Activated CD4-positive, alpha-beta T cell treated with anti-CD3 and anti-CD28 coated beads, Interleukin-2, amount 10 ng/mL, durations not matched to agents 24 days and 14 days (primary cell): ENCODE measurements at regions of chr2 and their contacts with region 1.

Region 1: DNA sequence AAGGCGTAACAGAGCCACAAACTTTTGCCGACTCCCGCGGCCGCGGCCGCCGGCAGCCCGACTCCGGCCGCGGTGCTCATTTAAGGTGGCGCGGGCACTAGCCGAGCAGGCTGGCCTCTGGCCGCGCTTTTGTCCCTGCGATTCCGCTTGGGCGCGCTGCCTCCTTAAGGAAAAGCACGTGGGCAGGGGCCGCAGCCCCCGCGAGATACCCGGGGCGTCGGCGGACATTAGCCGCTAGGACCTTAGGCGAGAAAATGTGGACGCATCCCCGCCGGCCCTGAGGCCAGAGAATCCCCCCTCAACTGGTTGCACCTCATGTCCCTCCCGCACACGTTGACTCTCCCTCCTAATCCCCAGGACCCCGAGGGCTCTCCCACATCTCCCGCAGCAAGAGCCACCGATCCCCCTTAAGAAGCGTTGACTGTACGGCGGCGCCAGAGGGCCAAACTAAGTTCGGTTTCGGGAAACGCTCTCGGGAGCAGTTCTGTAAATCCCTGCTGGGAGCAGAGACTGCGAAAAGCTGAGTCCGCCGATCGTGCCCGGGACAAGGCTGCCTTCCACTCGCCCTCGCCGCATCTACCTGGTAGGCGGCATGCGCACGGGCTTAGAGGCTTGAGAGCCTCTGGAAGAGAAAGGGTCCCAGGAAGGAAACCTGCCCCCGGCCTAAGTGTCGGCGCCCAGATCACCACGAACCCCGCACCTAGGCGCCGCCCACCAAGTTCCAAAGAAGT is 1.7 kb upstream of the SATB2 start:
- DNase-seq: peak; percentile 85
- H3K4me3 Mint-ChIP-seq: peak overlapping the region; percentile 91
- H3K27ac Mint-ChIP-seq: peak overlapping the region; percentile 75
- H3K4me1 Mint-ChIP-seq: peaks cover 15% of the 10 kb centered on the region
- H3K27me3 Mint-ChIP-seq: peaks cover 57% of the 10 kb centered on the region

Region 2: DNA sequence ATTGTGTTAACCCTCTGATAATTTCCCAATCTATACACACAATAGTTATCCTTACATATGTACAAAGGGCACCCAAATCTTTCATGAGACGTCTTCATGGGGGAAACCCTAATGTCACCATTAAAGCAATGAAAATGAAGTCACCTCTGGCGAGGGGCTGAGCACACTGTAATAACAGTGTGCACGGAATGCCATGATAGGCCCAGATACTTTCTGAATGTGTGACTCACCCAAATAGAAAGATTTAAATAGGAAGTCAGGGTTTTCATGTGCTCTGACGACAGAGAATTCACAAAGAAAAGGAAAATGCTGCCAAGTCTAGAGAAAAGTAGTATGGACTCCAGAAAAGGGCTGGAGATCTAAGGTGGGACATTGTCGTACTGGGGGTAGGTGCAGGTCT is 130.0 kb before region 1 on chr2:
- intact Hi-C with region 1: no loop called
- DNase-seq: no peak
- H3K4me3 Mint-ChIP-seq: no peak overlapping the region
- H3K27ac Mint-ChIP-seq: no peak overlapping the region
- H3K4me1 Mint-ChIP-seq: no peaks in the 10 kb centered on the region
- H3K27me3 Mint-ChIP-seq: no peaks in the 10 kb centered on the region

Region 3: DNA sequence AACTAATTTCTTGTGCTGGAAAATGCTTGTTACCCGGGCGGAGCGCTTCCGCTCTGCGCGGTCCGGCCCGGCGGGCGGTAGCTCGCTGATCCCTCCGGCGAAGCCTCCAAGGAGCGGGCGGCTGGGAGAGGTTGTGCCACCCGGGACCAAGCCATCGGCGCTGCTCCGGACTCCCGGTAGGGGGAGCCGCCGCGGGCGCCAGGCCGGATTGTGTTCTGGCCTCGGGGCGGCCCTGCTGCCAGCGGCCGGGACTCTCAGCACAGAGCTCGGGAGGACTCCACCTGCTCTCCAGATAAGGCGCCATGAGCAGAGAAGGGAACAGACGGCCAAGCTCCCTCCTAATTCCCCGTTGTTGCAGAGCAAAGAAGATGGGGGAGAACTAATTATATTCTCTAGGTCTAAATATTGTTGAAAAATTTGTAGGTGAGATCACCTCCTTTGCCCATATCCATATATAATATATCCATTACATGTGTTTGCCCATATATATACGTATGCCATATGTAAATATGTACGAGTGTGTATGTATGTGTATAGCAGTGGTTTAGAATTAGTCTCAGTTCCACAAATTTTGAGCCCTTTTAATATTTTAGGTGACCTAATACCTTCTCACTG is 12.1 kb after region 1 on chr2:
- intact Hi-C with region 1: loop called (anchors 1 kb)
- DNase-seq: peak; percentile 75
- H3K4me3 Mint-ChIP-seq: no peak overlapping the region
- H3K27ac Mint-ChIP-seq: no peak overlapping the region
- H3K4me1 Mint-ChIP-seq: peaks cover 2% of the 10 kb centered on the region
- H3K27me3 Mint-ChIP-seq: peaks cover 79% of the 10 kb centered on the region